ENCODE measurements at regions of chr12 and their contacts with region 1.

Region 1: DNA sequence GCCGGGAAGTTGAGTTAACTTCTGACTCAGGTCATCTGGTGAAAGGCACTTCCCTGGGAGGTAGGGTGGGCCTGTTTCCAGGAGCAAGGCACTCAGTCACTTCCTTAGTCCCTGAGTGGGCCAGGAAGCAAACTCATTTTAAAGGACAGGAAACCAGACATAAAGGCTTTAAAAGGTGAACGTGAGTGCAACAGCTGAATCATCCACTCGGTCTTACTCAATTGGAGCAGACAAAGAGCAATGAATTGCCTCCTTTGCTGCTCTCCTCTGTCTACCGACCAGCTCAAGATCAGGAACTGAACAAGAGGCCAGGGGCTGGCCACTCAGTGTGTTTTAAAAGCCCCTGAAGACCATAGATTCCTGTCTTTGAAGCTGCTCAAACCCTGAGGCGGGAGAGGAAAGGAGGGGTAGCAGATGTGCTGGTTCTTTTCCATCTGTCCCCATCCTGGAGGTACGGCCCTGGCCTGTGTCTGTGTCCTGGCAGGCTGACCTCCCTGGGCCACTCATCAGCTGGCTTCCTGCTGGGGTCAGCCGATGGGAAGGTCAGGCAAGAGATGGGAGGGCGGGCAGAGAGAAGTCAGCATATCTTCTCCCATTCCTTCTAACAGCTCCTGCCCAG is 148.9 kb downstream of the PPM1H start:
- DNase-seq: peak; percentile 73
- H3K4me3 ChIP-seq: no peak overlapping the region
- CTCF ChIP-seq: no peak

Region 2: DNA sequence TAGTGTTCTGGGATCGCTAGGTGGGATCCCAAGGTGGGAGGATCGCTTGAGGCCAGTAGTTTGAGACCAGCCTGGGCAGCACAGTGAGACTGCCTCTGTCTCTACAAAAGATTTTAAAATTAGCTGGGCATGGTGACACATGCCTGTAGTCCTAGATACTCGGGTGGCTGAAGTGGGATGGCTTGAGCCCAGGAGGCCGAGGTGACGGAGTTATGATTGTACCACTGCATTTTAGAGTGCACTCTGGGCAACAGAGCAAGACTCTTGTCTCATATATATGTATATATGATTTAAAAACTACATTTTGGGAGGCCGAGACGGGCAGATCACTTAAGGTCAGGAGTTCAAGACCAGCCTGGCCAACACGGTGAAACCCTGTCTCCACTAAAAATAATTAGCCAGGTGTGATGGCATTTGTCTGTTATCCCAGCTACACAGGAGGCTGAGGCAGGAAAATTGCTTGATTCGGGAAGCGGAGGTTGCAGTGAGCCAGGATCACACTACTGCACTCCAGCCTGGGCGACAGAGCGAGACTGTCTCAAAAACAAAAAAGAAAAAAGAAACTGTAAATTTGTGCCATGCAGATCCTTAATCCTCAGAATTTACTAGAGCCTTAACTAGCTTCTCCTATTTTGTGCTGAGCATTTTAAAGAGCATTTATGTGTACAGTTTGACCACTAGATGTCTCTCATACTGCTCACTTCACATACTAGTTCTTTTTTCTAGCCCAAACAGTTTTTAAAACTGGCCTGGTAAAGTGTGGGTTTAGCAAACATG is 204.6 kb before region 1 on chr12:
- in situ Hi-C with region 1: loop called (anchors 10 kb)
- DNase-seq: peak; percentile 55
- H3K4me3 ChIP-seq: no peak overlapping the region
- CTCF ChIP-seq: peak; percentile 49

Region 3: GRCh38 chr12:62684570-62685295 is 101.3 kb before region 1 on chr12:
- in situ Hi-C with region 1: no loop called
- DNase-seq: no peak
- H3K4me3 ChIP-seq: no peak overlapping the region
- CTCF ChIP-seq: no peak

Region 4: DNA sequence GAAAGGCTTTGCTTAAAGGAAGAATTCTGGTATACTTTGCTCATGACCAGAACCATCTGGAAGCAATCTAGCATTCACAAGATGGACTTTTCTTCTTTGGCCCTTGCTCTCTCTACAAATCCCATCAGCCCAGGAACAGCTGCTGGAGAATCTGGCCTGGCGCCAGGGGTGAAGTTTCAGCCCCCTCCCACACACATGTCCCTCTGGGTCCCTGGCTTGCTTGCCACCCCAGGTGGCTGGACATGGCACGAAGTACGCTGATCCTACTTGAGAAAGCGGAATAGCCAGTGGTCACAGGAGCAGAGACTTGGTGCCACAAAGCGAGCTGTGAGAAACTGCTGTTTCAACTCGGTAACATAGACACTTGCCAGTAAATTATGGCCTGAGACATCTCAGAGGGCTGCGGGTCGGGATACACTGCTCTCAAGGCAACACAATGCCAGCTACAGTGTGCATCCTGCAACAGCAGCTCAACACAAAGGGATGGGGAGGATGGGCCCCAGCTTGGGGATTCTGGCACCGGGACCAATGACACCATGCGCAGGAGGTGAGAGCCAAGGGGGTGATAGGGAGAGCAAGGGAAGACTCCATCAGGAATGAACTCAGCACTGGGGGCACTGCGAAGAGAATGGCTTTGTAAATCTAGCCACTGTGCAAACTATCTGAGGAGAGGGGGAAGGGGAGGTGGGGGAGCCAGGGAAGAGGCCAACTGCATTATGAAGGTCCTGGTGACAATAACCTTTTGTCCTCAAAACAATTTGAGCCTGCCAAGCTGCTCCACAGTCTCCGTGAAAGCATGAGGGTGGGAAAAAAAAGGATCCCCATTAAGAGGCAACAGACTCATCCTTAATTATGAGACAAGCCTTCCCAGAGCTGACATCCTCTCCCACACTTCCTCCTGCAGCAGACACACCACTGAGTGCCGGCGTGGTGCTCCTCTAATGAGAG is 71.0 kb before region 1 on chr12:
- in situ Hi-C with region 1: loop called (anchors 5 kb)
- DNase-seq: no peak
- H3K4me3 ChIP-seq: no peak overlapping the region
- CTCF ChIP-seq: no peak

Region 5: DNA sequence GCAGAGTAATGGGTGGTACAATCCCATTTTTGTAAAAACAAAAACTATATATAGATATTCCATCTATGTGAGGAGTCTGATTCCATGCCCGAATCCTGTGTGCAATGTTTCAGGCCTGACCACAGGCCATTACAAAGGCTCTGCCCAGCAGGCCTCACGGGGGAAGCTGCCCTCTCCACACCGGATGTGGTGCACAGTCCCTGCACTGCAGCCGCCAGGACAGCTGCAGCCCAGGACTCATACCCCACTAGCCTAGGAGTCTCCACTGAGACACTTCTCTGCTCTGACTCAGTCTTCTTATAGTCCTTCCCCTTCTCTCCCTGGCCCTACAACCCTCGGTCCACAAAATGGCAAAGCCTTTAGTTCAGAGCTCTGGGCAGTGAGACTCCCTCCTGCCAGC is 41.5 kb before region 1 on chr12:
- in situ Hi-C with region 1: no loop called
- DNase-seq: no peak
- H3K4me3 ChIP-seq: no peak overlapping the region
- CTCF ChIP-seq: no peak